Tibial artery (tissue), 4 donors: ENCODE measurements at regions of chr13 and their contacts with region 1.

Region 1: DNA sequence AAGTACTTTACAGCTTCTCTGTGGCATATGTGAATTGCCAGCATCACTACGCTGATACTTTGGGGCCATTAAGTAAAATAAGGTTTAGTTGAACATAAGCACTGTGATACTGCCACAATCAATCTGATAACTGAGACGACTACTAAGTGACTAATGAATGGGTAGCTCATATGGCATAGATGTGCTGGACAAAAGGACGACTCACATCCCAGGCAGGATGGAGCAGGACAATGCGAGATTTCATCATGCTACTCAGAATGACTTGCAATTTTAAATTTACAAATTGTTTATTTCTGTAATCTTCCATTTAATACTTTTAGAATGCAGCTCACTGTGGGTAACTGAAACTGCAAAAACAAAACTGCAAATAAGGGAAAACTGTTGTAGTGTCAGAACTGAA is 13.6 kb downstream of the CCDC122 start:
- DNase-seq: no peak
- H3K4me3 ChIP-seq: no peak overlapping the region
- H3K27ac ChIP-seq: no peak overlapping the region
- H3K4me1 ChIP-seq: no peaks in the 10 kb centered on the region
- H3K27me3 ChIP-seq: no peaks in the 10 kb centered on the region
- CTCF ChIP-seq: no peak

Region 2: DNA sequence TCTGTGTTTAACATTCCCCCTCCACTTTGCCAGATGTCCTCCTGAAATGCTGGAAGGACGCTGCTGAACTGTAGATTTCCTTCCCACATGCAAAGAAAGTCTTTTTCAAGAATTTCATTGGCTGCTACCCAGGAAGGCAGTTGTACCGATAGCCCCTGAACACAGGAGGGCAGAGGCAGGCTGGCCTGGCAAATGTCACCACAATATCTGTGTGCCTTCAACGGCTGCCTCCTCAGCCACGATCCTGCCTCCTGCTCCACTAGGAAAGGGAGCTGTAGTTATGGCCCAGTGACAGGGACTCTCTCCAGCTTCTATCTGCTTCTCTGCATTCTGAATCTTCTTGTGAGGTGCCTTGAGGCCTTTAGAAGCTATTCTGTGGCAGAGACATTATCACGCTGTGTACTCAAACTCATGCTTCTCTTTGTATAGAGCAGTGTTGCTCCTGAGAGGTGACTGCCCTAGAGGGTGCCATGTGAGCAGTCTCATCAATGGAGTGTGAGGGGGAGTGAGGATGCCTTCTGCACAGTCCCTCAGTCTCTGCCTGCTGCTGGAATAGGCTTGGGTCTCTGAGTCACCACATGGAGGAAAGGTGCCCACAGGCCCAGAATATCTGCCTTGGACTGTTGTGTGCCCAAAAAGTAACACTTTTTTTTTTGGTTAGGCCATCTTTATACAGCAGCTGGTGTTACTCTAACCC is 562.7 kb before region 1 on chr13:
- intact Hi-C with region 1: loop called (anchors 5 kb)
- DNase-seq: peak; percentile 34 to 70
- H3K4me3 ChIP-seq: no peak overlapping the region
- H3K27ac ChIP-seq: no peak overlapping the region
- H3K4me1 ChIP-seq: peaks cover 0 to 7% (median 3%) of the 10 kb centered on the region in 4 donors
- H3K27me3 ChIP-seq: no peaks in the 10 kb centered on the region
- CTCF ChIP-seq: peak; percentile 56 to 58